ENCODE measurements at regions of chr14 and their contacts with region 1.

Region 1: DNA sequence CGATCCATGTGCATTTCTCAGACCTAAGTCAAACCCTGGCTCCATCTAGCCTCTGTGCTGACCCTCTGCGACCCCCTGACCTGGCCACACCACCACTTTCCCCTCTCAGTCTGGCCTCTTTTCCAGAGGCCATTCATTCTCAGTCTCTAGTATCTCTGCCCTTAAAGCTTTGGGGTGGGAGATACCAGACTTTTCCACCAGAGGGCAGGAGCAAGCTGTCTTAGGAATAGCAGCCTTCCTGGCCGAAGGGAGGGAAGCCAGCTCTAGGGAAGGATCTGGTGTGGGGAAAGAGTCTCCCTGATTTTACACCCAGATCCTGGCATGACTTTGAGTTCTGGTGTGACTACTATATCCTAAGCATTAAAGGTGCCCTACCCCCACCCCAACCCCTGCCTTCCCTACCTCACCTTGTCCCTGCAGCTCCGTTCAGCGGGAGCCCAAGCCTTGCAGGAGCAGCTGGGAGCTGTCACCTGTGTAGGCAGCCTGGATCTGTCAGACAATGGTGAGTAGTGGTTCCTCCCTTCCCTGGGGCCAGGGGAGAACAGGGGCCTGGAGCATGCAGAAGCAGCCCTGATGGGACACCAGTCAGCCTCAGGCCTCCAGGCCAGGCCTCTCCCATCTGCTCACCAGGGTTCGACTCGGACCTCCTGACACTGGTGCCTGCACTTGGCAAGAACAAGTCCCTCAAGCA is 6.6 kb downstream of the CARMIL3 start:
- DNase-seq: peak; percentile 70
- CTCF ChIP-seq: peak; percentile 73

Region 2: GRCh38 chr14:23801766-23802165 is 256.6 kb before region 1 on chr14:
- CTCF ChIA-PET with region 1: no interaction called
- POLR2A ChIA-PET with region 1: no interaction called
- DNase-seq: no peak
- CTCF ChIP-seq: no peak

Region 3: GRCh38 chr14:24042746-24043145 is 15.7 kb before region 1 on chr14:
- CTCF ChIA-PET with region 1: interaction called, 11 read pairs
- POLR2A ChIA-PET with region 1: no interaction called
- DNase-seq: no peak
- CTCF ChIP-seq: no peak

Region 4: GRCh38 chr14:24075485-24076301 is 17.3 kb after region 1 on chr14:
- CTCF ChIA-PET with region 1: interaction called, 100 read pairs
- POLR2A ChIA-PET with region 1: no interaction called
- DNase-seq: peak; percentile 61
- CTCF ChIP-seq: no peak

Region 5: DNA sequence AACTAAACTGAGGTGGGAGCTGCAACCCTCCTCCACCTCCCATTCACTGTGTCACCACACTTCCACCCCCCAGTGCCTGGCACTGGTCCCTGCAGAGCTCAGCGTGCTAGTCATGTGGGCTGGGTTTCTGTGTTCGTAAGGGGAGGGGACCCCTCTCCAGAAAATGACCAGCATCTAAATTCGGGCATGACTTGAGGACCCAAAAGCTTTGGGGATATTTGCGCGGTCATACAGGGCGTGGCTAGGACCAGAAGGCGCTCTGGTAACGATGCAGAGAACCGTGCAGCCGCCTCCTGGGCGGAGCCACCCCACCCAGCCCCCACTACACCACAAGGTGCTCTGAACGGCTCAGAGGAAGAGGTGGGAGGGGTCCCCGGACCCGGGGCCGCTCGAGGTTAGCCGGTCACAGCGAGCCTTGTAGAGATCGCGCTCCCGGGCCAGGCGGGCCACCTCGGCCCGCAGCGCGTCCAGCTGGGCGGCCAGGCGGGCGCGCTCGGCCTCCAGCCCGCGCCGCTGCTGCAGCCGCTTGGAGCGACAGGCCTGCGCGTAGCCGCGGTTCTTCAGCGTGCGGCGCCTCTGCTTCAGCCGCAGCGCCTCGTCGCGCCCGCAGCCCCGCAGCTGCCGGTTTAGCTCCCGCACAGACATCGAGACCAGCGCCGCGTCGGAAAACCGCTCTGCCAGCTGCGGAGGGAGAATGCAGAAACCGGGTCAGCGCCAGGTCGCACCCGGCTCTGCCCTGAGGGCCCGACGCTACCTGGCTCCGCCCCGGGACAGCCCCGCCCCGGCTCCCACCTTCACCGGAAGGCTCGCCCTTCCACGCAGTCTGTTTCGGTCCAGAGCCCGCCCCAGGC is 22.7 kb after region 1 on chr14:
- CTCF ChIA-PET with region 1: interaction called, 100 read pairs
- POLR2A ChIA-PET with region 1: no interaction called
- DNase-seq: peak; percentile 86
- CTCF ChIP-seq: no peak

Measured in GM10248 (cell line).